ENCODE measurements at regions of chr12 and their contacts with region 1.

Region 1: GRCh38 chr12:59425798-59426197 is 170.0 kb upstream of the SLC16A7 start:
- DNase-seq: no peak
- ATAC-seq: no peak
- H3K4me3 ChIP-seq: no peak overlapping the region
- H3K27ac ChIP-seq: no peak overlapping the region
- H3K4me1 ChIP-seq: no peaks in the 10 kb centered on the region
- H3K27me3 ChIP-seq: no peaks in the 10 kb centered on the region

Region 2: DNA sequence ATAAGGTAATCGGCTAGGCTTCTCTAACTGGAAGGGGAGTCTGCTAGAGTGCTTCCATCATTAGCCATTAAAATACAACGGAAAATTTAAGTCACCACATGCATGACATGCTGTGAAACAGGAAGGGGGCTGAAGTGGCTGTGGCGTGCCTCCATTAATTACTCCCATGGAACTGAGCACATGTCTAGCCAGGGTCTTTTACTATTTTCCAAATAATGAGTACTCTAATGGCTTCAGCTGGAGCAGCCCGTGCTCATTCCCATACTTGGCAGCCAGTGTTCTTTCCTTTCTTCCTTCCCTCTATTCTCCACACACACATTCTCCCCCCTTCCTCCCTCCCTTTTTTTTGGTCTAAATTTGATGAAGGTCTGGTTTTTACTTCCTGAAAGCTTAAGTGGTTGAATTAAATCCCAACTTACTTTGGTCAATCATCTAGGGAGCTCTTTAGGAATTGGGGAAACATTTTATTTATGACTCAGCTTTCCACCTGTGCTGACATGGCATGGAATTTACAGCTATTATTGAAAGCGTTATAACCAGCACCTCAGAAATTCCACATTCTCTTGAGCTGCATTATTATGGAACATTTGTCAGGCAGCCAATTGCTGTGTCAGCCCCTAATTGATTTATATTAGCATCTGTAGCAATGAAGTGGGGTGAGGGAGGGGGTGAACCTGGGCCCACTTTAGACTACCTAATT is 577.7 kb before region 1 on chr12:
- intact Hi-C with region 1: no loop called
- DNase-seq: no peak
- ATAC-seq: no peak
- H3K4me3 ChIP-seq: no peak overlapping the region
- H3K27ac ChIP-seq: no peak overlapping the region
- H3K4me1 ChIP-seq: no peaks in the 10 kb centered on the region
- H3K27me3 ChIP-seq: no peaks in the 10 kb centered on the region

Region 3: DNA sequence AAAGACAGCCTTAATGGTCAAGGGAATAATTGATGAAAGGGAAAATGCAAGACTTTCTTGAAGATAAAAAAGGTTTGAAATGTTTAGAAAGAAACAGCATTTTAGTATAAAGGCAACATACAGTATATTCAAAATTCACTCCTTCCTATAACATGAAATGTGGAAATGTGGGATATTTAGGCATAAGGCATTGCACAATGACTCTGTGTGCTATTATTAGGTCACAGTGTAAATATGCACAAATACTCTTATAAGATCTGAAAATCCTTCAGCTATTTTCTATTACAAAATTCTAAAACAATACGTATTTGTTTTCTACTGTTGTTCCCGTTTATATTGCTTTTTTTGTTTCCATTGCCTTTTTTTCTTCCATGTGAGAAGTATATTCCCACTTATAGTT is 297.7 kb after region 1 on chr12:
- intact Hi-C with region 1: no loop called
- DNase-seq: no peak
- ATAC-seq: no peak
- H3K4me3 ChIP-seq: no peak overlapping the region
- H3K27ac ChIP-seq: no peak overlapping the region
- H3K4me1 ChIP-seq: no peaks in the 10 kb centered on the region
- H3K27me3 ChIP-seq: no peaks in the 10 kb centered on the region

Region 4: GRCh38 chr12:59963546-59963945 is 537.7 kb after region 1 on chr12:
- intact Hi-C with region 1: loop called in 1 of 4 experiments (anchors 5 kb)
- DNase-seq: no peak
- ATAC-seq: no peak
- H3K4me3 ChIP-seq: no peak overlapping the region
- H3K27ac ChIP-seq: no peak overlapping the region
- H3K4me1 ChIP-seq: no peaks in the 10 kb centered on the region
- H3K27me3 ChIP-seq: no peaks in the 10 kb centered on the region

Measured in right cardiac atrium (tissue), 5 donors.